Heart right ventricle (tissue), 16 donors: ENCODE measurements at regions of chr6 and their contacts with region 1.

Region 1: DNA sequence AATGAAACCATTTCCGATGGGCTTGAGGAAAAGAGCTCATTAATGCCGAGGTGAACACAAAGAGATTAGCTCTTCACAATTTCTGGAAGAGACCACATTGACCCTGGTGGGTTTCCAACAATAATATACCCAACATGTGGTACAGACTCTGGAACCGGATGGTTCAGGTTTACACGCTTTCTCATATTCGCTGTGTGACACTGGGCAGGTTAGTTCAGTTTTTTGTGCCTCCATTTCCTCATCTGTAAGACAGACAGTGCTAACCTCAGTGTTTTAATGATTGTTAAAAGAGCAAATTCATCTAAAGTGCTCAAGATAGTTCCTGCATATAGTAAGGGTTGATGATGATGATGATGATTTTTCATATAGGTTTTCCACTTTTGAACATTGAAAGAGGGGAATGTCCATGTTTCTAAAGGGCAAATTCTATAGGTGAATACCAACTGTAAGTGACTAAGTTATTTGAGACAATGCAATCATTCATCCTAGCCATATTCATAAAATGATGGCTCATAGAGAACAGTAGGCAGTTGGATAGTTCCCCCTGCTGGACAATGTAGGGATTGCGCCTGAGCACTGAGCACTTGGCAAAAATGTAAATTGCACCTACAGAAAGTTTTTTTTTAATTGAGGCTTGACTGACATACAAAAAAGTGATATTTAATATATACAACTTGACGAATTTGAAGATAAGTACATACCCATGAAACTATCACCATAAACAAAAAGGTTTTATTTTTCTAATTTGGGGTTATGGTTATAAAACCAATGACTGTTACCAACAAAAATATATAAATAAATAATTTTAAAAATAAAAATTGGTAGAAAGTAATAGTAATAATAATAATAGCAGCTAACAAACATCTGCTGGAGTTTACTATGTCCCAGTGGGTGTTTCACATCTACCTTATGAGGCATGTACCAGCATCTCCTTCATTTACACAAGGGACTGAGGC is 2.1 kb upstream of the PERP start:
- DNase-seq: peak; percentile 29 to 67
- ATAC-seq: peak in 3 of 8 donors; percentile 24 to 47 (median 43)
- H3K4me3 ChIP-seq: no peak overlapping the region
- H3K27ac ChIP-seq: no peak overlapping the region
- H3K4me1 ChIP-seq: peaks cover 0 to 22% (median 13%) of the 10 kb centered on the region in 9 donors
- H3K27me3 ChIP-seq: peaks cover 0 to 54% (median 26%) of the 10 kb centered on the region in 7 donors
- CTCF ChIP-seq: peak; percentile 88 to 98 (median 96)

Region 2: GRCh38 chr6:137697267-137697938 is 411.9 kb before region 1 on chr6:
- intact Hi-C with region 1: loop called in 6 of 10 experiments (anchors 5 to 10 kb)
- DNase-seq: no peak
- ATAC-seq: peak; percentile 30 to 81 (median 60)
- H3K4me3 ChIP-seq: no peak overlapping the region
- H3K27ac ChIP-seq: peak overlapping the region in 9 of 10 donors; percentile 26 to 79 (median 63)
- H3K4me1 ChIP-seq: peaks cover 0 to 69% (median 36%) of the 10 kb centered on the region in 9 donors
- H3K27me3 ChIP-seq: no peaks in the 10 kb centered on the region
- CTCF ChIP-seq: peak in 1 of 9 donors; percentile 17

Region 3: DNA sequence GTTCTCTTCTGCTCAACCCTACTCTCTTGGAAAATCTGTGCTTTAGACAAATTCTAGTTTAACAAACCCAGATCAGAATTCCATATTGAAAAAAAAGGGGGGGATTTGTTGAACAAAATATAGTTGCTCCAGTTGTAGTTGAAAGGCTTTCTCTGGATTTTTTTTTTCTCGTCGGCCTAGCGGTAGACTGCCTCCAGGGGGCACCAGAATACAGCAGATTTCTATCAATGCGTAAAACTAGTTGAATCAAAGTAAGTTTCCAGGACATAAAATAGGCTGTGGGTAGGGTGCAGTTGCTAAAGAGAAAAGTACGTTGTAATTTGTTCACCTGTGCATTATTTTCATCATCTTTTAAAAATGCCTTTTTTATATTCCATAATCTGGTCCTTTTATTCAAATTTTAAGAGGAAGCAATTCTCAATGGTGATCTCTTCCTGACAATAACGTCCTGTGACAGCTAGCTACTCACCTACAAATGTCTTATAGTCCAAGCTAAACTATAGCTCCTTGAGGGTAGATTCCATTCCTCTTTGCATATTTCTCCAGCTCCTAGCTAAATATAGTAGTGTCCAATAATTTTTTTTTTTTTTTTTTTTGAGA is 107.5 kb before region 1 on chr6:
- intact Hi-C with region 1: loop called (anchors 1 to 5 kb)
- DNase-seq: peak in 1 of 2 donors; percentile 51
- ATAC-seq: peak in 3 of 8 donors; percentile 41 to 48 (median 47)
- H3K4me3 ChIP-seq: no peak overlapping the region
- H3K27ac ChIP-seq: no peak overlapping the region
- H3K4me1 ChIP-seq: peaks cover 0 to 3% (median 0%) of the 10 kb centered on the region in 9 donors
- H3K27me3 ChIP-seq: peaks cover 0 to 3% (median 0%) of the 10 kb centered on the region in 7 donors
- CTCF ChIP-seq: peak; percentile 67 to 91 (median 86)

Region 4: GRCh38 chr6:138012682-138013081 is 96.6 kb before region 1 on chr6:
- intact Hi-C with region 1: no loop called
- DNase-seq: no peak
- ATAC-seq: no peak
- H3K4me3 ChIP-seq: no peak overlapping the region
- H3K27ac ChIP-seq: no peak overlapping the region
- H3K4me1 ChIP-seq: no peaks in the 10 kb centered on the region
- H3K27me3 ChIP-seq: no peaks in the 10 kb centered on the region
- CTCF ChIP-seq: no peak

Region 5: DNA sequence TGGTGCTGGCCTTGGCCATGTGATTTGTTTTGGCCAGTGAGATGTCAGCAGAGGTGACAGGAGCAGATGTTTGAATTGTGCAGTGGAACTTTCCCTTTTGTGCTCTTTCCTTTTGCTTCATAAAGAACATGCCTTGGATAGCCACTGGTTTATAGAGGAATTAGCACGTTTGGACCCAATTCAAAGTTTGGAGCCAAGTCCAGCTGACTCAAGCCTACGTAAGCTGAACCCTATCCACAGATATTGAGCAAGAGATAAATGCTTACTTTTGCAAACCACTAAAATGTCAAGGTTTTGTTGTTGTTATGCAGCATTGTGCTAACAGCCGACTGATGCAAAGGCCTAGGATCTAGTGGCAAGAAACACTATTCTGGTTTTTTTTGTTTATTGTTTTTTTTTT is 1496.0 kb after region 1 on chr6:
- intact Hi-C with region 1: no loop called
- DNase-seq: no peak
- ATAC-seq: peak in 2 of 8 donors; percentile 20 to 73
- H3K4me3 ChIP-seq: no peak overlapping the region
- H3K27ac ChIP-seq: no peak overlapping the region
- H3K4me1 ChIP-seq: peaks cover 0 to 3% (median 0%) of the 10 kb centered on the region in 9 donors
- H3K27me3 ChIP-seq: no peaks in the 10 kb centered on the region
- CTCF ChIP-seq: no peak